AG04449 (cell line): ENCODE measurements at regions of chr12 and their contacts with region 1.

Region 1: DNA sequence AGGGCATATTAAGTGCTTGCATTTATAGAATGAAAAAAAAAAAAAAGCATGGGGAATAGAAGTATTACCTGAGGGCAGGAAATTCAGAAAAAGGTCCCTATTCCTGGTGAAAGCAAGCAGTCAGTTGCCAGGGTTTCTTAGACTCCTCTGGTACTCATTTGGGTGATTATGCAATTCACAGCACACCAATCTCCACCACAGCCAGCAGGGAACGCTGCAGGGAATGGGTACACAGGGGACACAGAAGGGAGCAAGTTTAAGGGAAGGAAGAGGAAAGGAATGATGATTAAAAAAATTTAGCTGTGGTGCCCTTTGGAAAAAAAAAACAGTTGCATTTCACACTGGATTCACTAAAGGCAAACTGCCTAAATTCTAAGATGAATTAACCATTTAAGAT is 14.2 kb downstream of the BLTP3B start:
- DNase-seq: no peak
- H3K4me3 ChIP-seq: no peak overlapping the region
- CTCF ChIP-seq: peak; percentile 41

Region 2: DNA sequence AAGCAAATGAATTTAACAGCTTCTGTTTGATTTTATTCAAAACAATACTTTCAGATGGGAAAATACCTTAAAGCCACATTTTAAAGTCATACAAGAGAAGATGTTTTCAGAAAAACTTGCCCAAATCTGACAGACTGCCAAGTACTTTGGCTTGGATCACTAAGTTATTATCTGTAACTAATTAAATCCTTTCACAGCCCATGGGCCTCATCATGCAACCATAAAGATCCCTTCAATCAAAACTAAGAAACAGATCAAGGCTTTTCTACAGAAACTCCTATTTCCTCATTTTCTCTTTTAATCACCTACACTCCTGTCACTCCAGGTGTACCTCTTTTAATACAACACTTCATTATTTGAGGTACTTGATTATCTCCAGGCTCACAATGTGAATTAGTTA is 13.9 kb before region 1 on chr12:
- CTCF ChIA-PET with region 1: no interaction called
- POLR2A ChIA-PET with region 1: no interaction called
- DNase-seq: no peak
- H3K4me3 ChIP-seq: no peak overlapping the region
- CTCF ChIP-seq: no peak

Region 3: DNA sequence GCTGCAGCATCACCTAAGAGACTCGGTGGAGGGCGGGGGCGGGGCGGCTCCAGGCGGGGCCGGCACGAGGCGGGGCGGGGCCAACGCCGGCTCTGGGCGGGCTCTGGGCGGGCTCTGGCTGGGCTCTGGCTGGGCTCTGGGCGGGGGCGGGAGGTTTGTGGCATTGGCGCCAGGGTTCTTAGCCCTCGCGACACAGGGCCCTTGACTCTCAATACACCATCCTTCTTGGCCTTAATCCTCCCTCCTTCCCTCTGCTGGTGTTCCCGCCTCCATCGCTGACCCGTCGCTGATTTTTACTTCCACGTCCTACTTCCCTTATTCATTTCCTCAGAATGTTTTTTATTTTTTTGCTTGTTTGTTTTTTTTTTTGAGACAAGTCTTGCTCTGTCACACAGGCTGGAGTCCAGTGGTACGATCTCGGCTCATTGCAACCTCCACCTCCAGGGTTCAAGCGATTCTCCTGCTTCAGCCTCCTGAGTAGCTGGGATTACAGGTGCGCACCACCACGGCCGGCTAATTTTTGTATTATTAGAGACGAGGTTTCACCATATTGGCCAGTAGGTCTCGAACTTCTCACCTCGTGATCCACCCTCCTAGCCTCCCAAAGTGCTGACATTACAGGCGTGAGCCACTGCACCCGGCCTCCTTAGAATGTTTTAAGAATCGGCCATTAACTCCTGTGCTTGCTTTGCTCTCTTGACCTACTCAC is 14.5 kb after region 1 on chr12 and contains the start of gene BLTP3B:
- CTCF ChIA-PET with region 1: interaction called, 19 read pairs
- POLR2A ChIA-PET with region 1: no interaction called
- DNase-seq: no peak
- H3K4me3 ChIP-seq: peak within 1 kb of the TSS; percentile 91
- CTCF ChIP-seq: no peak